ENCODE measurements at regions of chr9 and their contacts with region 1.

Region 1: GRCh38 chr9:75185585-75186170 is 97.4 kb downstream of the OSTF1 start:
- DNase-seq: peak; percentile 72
- ATAC-seq: peak; percentile 84
- H3K4me3 Mint-ChIP-seq: no peak overlapping the region
- H3K27ac Mint-ChIP-seq: peak overlapping the region; percentile 18
- H3K4me1 Mint-ChIP-seq: peaks cover 20% of the 10 kb centered on the region
- H3K27me3 Mint-ChIP-seq: no peaks in the 10 kb centered on the region

Region 2: DNA sequence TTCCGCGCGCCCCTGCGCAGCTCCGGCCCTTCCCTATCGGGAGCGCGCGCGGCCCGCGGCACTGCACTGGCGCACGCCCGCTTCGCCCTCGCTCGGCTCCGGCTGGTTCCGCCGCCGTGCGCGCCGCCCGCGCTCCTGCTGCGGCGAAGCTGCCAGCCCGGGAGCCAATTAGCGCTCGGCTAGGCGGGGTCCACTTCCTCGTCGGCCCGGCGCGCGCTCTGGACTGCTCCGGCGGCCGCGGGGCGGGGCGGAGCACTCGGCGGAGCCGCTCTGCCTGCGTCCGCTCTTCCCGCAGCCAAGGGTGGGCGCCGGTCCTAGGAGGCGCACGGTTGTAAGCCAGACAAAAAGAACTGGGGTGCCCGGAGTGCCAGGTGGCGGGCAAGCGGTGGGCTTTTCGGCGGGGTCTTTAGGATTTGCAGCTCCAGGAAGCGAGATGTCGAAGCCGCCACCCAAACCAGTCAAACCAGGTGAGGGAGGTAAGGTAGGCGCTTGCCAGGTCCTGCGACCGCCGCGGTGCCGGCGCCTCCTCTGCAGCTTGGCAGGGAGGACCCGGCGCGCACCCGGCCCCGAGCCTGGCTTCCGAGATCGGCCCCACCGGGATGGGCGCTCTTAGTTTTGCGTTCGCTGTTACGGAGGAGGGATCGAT is 97.3 kb before region 1 on chr9 and contains the start of gene OSTF1:
- CTCF ChIA-PET with region 1: interaction called, 14 read pairs
- DNase-seq: peak; percentile 95
- ATAC-seq: peak; percentile 89
- H3K4me3 Mint-ChIP-seq: peak within 1 kb of the TSS; percentile 93
- H3K27ac Mint-ChIP-seq: peak within 1 kb of the TSS; percentile 97
- H3K4me1 Mint-ChIP-seq: peaks cover 61% of the 10 kb centered on the region
- H3K27me3 Mint-ChIP-seq: no peaks in the 10 kb centered on the region
- total RNA-seq, gene OSTF1: 149 to 198 TPM

Region 3: DNA sequence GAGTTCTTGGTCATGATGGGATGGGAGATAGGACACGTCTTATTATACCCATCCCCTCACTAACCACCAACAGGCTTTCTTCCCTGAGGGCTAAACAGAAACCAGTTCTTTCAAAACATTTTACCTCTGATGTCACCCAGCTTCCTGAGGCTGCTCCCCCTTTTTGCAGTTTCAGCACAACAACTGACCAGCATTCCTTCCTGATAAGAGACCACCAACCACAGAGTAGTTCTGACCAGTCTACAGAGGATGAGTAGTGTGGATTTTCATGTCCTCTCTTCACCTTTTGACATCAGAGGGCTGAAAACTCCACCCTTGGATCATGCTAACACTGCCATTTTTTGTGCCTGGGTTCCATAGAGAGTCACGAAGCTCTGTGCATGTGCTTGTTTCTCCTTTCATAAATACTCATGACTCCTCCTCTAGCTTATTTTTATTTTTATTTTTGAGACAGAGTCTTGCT is 14.7 kb before region 1 on chr9:
- CTCF ChIA-PET with region 1: interaction called, 33 read pairs
- DNase-seq: peak; percentile 47
- ATAC-seq: peak; percentile 81
- H3K4me3 Mint-ChIP-seq: no peak overlapping the region
- H3K27ac Mint-ChIP-seq: peak overlapping the region; percentile 76
- H3K4me1 Mint-ChIP-seq: peaks cover 59% of the 10 kb centered on the region
- H3K27me3 Mint-ChIP-seq: no peaks in the 10 kb centered on the region